Cardiac septum (tissue), 1 donor: ENCODE measurements at regions of chr2 and their contacts with region 1.

Region 1: GRCh38 chr2:230614913-230615332 is 97.7 kb upstream of the CAB39 start:
- DNase-seq: no peak

Region 2: DNA sequence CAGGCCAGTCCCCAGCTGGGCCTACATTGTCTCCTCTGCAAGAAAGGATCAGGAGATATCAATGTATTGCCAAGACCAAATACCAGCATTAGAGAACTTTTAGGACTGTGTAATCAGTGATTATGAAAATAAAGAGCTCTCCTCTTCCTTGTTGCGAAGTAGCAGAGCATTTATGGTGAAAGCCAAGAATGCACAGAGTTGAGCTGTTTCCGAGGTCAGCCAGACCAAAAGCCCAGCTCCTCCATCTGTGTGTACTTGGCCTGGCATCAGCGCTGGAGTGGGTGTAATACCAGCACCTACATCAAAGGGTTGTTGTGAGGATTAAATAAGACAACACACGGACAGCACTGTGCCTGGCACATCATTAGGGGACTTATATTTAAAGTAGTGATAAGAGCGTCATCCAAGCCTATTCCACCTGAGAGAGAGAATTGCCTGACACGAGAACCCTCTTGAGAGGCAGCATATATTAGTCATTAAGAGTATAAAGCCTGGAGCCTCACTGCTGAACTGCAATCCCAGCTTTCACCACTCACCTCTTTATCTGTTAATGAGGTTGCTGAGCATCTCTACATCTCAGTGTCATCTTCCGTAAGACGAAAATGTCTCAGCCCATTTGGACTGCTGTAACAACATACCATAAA is 538.8 kb before region 1 on chr2:
- intact Hi-C with region 1: no loop called
- DNase-seq: no peak

Region 3: DNA sequence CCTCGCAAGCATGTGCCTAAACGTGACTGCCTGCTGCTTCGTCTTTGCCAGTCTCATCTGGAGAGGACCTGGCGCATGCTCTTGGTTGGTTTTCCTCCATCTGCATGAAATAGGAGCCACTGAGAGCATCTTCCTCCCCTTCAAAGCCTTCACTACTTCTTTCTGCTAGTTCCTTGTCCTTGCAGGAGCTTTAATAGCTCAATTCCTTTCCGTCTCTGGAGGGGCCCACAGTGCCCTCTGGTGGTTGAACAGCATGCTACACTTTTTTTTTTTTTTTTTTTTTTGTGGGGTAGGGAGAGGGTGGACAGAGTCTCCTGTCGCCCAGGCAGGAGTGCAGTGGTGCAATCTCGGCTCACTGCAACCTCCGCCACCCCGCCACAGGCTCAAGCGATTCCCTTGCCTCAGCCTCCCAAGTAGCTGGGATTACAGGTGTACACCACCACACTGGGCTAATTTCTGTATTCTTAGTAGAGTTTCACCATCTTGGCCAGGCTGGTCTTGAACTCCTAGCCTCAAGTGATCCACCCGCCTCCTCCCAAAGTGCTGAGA is 454.7 kb before region 1 on chr2:
- intact Hi-C with region 1: loop called (anchors 5 kb)
- DNase-seq: no peak